Activated naive CD4-positive, alpha-beta T cell treated with anti-CD3 and anti-CD28 coated beads, Interleukin-2, amount 10 ng/mL, durations not matched to agents 7 days and 5 days (primary cell): ENCODE measurements at regions of chr2 and their contacts with region 1.

Region 1: GRCh38 chr2:240566203-240567136 is 1.8 kb upstream of the RNPEPL1 start:
- DNase-seq: peak; percentile 98
- H3K4me3 Mint-ChIP-seq: peak overlapping the region; percentile 92
- H3K27ac Mint-ChIP-seq: peak overlapping the region; percentile 95
- H3K4me1 Mint-ChIP-seq: peaks cover 72% of the 10 kb centered on the region
- H3K27me3 Mint-ChIP-seq: no peaks in the 10 kb centered on the region

Region 2: GRCh38 chr2:240423788-240424191 is 142.7 kb before region 1 on chr2:
- CTCF ChIA-PET with region 1: no interaction called
- DNase-seq: no peak
- H3K4me3 Mint-ChIP-seq: no peak overlapping the region
- H3K27ac Mint-ChIP-seq: no peak overlapping the region
- H3K4me1 Mint-ChIP-seq: peaks cover 6% of the 10 kb centered on the region
- H3K27me3 Mint-ChIP-seq: peaks cover 38% of the 10 kb centered on the region

Region 3: DNA sequence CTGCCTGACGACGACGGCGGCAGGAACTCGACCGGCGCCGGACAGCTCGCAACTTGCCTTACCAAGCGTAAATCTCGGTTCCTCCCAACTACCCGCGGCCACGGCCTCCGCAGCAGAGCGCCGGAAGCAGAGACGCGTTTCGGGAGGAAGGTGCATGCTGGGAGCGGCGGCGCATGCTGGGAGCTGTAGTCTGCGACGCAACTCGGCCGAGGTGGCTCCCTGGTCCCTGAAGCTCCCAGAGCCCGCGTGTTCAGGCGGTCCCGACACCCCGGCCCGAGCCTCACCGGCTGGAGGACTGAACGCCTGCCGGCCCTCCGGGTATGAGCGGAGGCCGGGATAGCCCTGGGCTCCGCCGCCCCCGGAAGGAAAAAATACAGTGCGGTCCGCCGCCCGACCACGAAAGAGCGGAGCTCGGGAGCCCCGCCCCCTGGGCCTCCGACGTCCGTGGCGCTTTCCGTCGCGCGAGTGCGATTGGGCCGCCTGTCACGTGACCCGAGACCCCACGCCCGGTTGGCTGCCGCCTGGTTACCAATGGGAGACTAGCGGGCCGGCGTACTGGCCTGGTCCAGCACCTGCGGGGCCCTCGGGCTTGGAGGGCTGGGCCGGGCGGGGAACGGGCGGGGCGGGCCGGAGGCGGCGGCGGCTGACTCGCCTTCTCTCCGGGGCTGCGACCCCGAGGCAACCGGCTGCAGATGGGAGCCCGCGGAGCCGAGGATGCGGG is 19.9 kb after region 1 on chr2 and contains the start of gene CAPN10:
- CTCF ChIA-PET with region 1: interaction called, 100 read pairs
- DNase-seq: peak; percentile 98
- H3K4me3 Mint-ChIP-seq: peak within 1 kb of the TSS; percentile 96
- H3K27ac Mint-ChIP-seq: peak within 1 kb of the TSS; percentile 96
- H3K4me1 Mint-ChIP-seq: peaks cover 52% of the 10 kb centered on the region
- H3K27me3 Mint-ChIP-seq: no peaks in the 10 kb centered on the region

Region 4: DNA sequence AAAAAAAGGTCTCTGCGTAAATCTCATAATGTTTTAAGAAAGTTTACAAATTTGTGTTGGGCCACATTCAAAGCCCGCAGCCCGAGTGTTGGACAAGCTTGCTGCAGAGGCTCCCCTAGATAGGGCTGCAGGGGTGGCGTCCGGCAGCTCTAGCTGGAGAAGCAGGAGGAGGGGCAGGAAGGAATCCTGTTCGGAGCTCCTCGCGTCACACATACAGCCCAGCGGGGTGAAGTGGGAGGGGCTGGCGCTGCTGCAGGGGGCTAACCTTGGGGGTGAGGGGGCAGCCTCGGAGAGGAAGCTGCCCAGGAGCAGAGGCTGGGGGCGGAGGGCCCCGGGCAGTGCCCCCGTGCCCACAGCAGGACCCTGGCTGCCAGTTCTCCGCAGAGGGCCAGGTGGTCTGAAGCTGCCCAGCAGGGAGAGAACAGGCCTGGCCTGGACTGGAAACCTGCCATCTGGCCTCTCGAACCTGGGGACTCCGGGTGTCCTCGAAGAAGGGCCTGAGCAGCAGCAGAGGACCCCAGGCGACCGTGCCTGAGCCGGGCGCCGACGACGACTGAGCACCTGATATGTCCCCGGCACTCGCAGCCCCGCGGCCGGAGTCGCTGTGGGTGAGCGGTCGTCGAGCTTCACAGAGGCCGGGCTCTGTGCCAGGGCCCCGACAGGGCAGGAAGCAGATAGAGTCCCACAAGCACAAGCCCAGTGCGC is 56.2 kb after region 1 on chr2:
- CTCF ChIA-PET with region 1: interaction called, 10 read pairs
- DNase-seq: peak; percentile 58
- H3K4me3 Mint-ChIP-seq: peak overlapping the region; percentile 35
- H3K27ac Mint-ChIP-seq: peak overlapping the region; percentile 93
- H3K4me1 Mint-ChIP-seq: peaks cover 69% of the 10 kb centered on the region
- H3K27me3 Mint-ChIP-seq: peaks cover 11% of the 10 kb centered on the region